ENCODE measurements at regions of chr4 and their contacts with region 1.

Region 1: GRCh38 chr4:141711014-141711610 is 74.7 kb downstream of the IL15 start:
- DNase-seq: no peak
- ATAC-seq: no peak
- H3K4me3 ChIP-seq: no peak overlapping the region
- H3K27ac ChIP-seq: no peak overlapping the region
- H3K4me1 ChIP-seq: peaks cover 0 to 5% (median 0%) of the 10 kb centered on the region in 12 donors
- H3K27me3 ChIP-seq: no peaks in the 10 kb centered on the region
- CTCF ChIP-seq: peak; percentile 44 to 78 (median 62)
- POLR2A ChIP-seq: no peak

Region 2: DNA sequence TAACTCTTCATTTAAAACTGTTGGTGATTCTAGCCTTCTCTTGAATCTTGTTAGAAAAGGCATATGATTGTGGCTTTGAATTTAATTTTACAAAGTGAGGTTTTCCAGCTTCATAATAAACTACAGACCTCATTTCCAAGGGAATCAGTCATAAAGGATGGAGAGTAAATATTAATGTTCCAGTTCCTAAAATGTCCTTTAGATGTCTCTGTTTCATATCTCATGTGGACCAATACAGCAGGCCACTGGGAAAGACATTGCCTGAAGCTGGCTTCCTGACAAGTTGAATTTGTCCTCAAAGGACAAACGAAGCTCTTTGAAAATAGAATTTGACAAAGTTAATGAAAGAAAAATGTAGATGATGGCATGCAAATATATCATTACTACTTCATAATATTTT is 365.0 kb before region 1 on chr4:
- intact Hi-C with region 1: loop called (anchors 2 to 10 kb)
- DNase-seq: peak in 3 of 5 donors; percentile 19 to 36 (median 34)
- ATAC-seq: peak in 3 of 4 donors; percentile 75 to 83 (median 79)
- H3K4me3 ChIP-seq: no peak overlapping the region
- H3K27ac ChIP-seq: no peak overlapping the region
- H3K4me1 ChIP-seq: peaks cover 0 to 29% (median 0%) of the 10 kb centered on the region in 12 donors
- H3K27me3 ChIP-seq: no peaks in the 10 kb centered on the region
- CTCF ChIP-seq: peak; percentile 43 to 73 (median 53)
- POLR2A ChIP-seq: no peak

Region 3: GRCh38 chr4:141410839-141411238 is 300.3 kb before region 1 on chr4:
- intact Hi-C with region 1: no loop called
- DNase-seq: no peak
- ATAC-seq: no peak
- H3K4me3 ChIP-seq: no peak overlapping the region
- H3K27ac ChIP-seq: no peak overlapping the region
- H3K4me1 ChIP-seq: peaks cover 0 to 10% (median 0%) of the 10 kb centered on the region in 12 donors
- H3K27me3 ChIP-seq: no peaks in the 10 kb centered on the region
- CTCF ChIP-seq: no peak
- POLR2A ChIP-seq: no peak

Region 4: DNA sequence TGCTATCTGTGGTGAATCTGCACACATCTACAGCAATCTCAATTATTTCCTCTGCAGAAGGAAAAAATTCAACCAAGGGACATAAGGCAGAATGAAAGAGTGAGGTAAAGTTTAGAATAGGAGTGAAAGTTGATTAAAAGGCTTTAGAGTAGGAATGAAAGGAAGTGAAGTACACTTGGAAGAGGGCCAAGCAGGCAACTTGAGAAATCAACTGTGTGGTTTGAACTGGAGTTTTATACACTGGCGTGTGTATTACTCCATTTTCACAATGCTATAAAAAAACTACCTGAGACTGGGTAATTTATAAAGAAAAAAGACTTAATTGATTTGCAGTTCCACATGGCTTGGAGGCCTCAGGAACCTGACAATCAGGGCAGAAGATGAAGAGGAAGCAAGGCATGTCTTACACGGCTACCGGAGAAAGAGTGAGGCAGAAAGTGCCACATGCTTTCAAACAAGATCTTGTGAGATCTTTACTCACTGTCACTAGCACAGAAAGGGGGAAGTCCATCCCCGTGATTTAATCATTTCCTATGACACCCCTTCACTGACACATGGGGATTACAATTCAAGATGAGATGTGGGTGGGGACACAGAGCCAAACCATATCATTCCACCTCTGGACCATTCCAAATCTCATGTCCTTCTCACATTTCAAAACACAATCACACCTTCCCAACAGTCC is 160.1 kb after region 1 on chr4:
- intact Hi-C with region 1: no loop called
- DNase-seq: no peak
- ATAC-seq: no peak
- H3K4me3 ChIP-seq: no peak overlapping the region
- H3K27ac ChIP-seq: no peak overlapping the region
- H3K4me1 ChIP-seq: no peaks in the 10 kb centered on the region
- H3K27me3 ChIP-seq: no peaks in the 10 kb centered on the region
- CTCF ChIP-seq: no peak
- POLR2A ChIP-seq: no peak

Region 5: DNA sequence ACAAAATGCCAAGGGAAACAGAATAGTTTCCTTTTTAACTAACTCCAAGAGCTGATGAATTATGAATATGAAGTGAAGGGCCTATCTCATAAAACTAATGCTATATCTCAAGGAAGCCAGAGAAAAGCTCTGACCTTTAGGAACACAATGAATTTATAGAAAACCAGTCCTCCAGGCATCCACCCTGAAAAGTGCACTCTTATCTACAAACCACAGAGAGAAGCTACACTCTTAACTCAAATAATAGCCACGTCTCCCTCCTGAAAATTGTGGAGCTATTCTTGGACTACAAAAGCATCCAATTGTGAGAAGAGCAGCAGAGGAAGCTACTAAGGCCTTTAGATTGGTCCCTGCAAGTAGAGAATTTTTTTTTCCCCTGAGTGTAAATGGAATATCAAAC is 179.2 kb after region 1 on chr4:
- intact Hi-C with region 1: no loop called
- DNase-seq: no peak
- ATAC-seq: no peak
- H3K4me3 ChIP-seq: no peak overlapping the region
- H3K27ac ChIP-seq: no peak overlapping the region
- H3K4me1 ChIP-seq: no peaks in the 10 kb centered on the region
- H3K27me3 ChIP-seq: no peaks in the 10 kb centered on the region
- CTCF ChIP-seq: no peak
- POLR2A ChIP-seq: no peak

Measured in heart left ventricle (tissue), 16 donors.